ENCODE measurements at regions of chr6 and their contacts with region 1.

Region 1: DNA sequence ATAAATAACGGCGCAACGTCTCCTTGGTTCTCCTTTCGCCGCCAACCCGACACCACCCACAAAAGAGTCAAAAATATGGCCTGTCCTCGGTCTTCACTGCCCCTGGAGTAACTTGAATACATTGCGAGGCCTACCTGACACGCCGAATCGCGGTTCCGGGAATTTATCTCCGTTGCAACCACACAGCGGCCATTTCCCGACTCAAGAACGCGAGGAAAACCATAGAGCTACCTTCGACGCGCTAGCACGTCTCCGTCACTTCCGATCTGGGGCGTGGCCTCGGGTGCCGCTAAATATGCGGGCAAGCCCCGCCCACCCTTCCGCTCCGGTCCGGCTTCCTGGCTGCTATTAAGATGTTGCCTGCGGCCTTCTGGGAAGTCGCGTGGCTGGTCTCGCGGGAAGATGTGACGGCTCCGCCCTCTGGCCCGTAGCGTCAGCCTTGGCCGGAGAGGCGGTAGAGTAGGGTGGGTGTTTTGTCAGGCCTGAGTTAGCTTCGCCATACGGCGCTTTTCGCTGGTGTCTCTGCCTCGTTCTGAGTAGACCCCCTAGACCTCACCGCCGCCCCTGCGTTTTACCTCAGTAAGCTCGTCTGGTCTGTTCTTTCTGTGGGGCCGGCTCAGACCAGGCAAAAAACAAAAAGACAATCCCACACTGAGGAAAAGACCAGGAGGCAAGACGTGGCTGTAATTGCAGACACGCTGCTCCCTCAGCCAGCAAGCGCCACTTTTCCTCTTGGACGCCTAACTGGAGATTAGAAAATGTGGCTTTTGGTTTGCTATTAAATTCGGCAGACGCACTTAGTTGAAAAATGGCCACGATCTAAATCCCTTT is at the start of gene BCLAF1:
- DNase-seq: peak; percentile 99
- H3K4me3 ChIP-seq: peak within 1 kb of the TSS; percentile 98
- H3K27ac ChIP-seq: peak within 1 kb of the TSS; percentile 100
- H3K27me3 ChIP-seq: no peaks in the 10 kb centered on the region
- CTCF ChIP-seq: no peak
- polyA plus RNA-seq, gene BCLAF1: 75.0 and 117 TPM in 2 replicates

Region 2: GRCh38 chr6:135497412-135498269 is 792.2 kb before region 1 on chr6 and contains the start of gene AHI1:
- CTCF ChIA-PET with region 1: no interaction called
- POLR2A ChIA-PET with region 1: interaction called, 16 read pairs
- DNase-seq: peak; percentile 81
- H3K4me3 ChIP-seq: peak within 1 kb of the TSS; percentile 83
- H3K27ac ChIP-seq: peak within 1 kb of the TSS; percentile 99
- H3K27me3 ChIP-seq: no peaks in the 10 kb centered on the region
- CTCF ChIP-seq: no peak
- polyA plus RNA-seq, gene AHI1: 18.5 and 29.0 TPM in 2 replicates

Region 3: DNA sequence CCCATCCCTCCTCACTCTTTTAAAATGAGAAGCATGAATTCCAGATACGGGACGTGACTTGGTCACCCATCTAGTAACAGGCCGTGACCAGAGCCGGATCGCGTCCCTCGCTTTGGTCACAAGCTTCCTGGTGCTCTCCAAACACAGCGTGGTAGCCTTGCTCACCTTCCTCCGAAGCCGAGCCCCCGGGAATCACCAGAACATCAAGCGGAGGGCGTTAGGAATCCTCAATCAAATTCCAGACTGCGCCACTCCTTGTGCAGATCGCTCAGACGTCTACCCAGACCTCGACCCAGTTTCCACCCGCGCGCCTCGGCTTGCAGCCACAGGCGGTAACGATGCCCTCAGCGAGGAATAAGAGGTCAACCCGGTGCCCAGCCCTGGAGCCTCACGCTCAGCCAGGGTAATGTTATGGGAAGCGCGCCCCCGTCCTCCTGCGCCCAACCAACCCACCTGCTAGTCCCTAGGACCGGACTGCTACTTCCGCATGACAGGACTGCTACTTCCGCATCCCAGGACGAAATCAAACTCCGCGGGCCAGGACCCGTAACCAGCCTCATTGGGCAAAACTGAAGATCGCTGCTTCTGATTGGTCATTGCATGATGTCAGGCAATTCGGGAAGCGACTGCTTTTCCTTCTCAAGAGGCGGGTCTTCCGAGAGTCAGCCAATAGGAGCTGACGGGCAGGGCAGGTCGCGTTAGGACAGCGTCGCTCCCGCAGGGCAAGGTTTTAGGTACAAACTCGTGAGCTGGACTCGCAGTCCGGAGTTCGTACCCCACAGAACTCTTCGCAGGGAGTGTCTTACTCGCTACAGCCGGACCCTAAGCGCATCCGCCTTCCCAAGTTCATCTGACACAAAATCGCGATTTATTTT is 39.7 kb before region 1 on chr6 and contains the start of gene MTFR2:
- CTCF ChIA-PET with region 1: interaction called, 3 read pairs
- POLR2A ChIA-PET with region 1: interaction called, 24 read pairs
- DNase-seq: peak; percentile 97
- H3K4me3 ChIP-seq: peak within 1 kb of the TSS; percentile 91
- H3K27ac ChIP-seq: peak within 1 kb of the TSS; percentile 59
- H3K27me3 ChIP-seq: no peaks in the 10 kb centered on the region
- CTCF ChIP-seq: no peak
- polyA plus RNA-seq, gene MTFR2: 2.6 and 3.3 TPM in 2 replicates